ENCODE measurements at regions of chr13 and their contacts with region 1.

Region 1: DNA sequence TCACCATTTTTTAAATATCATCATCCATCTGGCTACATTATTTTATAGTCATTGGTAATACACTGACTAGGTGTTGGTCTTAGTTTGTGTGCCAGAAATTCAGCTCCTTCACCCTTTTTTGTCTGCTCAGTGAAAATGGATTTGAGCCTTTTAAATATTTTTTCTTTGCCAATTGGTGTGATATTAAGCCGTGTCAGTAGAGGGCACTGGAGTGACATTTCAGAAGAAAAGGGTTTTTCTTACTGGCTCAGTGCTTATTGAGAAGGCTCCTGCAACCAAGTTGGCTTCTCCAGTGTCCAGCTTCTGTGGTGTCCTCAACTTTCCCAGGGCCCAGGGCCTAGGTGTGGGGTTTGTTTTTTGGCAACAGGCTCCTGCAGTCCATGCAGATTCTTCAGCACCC is 546.6 kb downstream of the DACH1 start:
- DNase-seq: peak; percentile 31
- H3K4me3 ChIP-seq: no peak overlapping the region
- H3K27ac ChIP-seq: no peak overlapping the region
- H3K4me1 ChIP-seq: no peaks in the 10 kb centered on the region
- H3K27me3 ChIP-seq: no peaks in the 10 kb centered on the region
- CTCF ChIP-seq: peak; percentile 18 to 49
- POLR2A ChIP-seq: no peak

Region 2: DNA sequence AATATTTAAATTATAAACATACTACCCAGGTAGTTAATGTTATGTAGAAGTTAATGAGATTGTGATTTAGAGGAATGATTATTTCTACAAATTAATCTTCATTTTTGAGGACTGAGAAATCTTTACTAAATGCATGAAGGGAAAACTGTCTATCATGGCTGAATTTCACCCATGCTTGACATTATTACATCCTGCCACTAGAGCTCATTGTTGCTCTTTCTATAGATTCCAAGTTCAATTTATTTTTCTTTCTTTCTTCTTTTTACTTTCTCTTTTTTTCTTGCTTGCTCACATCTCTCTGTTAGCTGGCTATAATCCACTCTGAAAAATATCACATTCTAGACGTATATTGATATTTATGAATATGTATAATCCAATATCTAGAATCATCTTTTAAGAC is 707.2 kb before region 1 on chr13:
- CTCF ChIA-PET with region 1: interaction called, 3 read pairs
- POLR2A ChIA-PET with region 1: no interaction called
- dilution Hi-C with region 1: no loop called
- intact Hi-C with region 1: loop called (anchors 2 kb)
- DNase-seq: peak; percentile 25
- H3K4me3 ChIP-seq: no peak overlapping the region
- H3K27ac ChIP-seq: no peak overlapping the region
- H3K4me1 ChIP-seq: no peaks in the 10 kb centered on the region
- H3K27me3 ChIP-seq: no peaks in the 10 kb centered on the region
- CTCF ChIP-seq: peak; percentile 25 to 33
- POLR2A ChIP-seq: no peak

Region 3: DNA sequence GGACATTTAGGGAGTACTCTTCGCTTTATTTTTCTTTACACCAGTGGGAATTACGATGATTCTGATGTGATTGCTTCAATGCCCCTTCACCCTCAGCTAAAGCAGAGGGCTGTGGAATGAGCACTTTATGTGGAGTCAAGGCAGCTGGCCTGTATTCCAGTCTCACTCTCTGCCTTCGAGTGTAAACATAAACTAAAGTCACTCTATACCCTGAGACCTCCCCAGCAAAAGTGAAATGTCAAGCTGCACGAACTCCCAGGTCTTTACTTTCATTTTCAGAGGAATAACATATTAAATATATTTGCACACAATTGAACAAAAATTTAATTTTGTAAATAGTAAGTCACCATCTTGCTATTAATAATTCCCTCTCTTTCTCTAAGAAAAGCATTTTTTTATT is 10.5 kb before region 1 on chr13:
- CTCF ChIA-PET with region 1: interaction called, 10 read pairs
- POLR2A ChIA-PET with region 1: no interaction called
- dilution Hi-C with region 1: no loop called
- intact Hi-C with region 1: no loop called
- DNase-seq: no peak
- H3K4me3 ChIP-seq: no peak overlapping the region
- H3K27ac ChIP-seq: no peak overlapping the region
- H3K4me1 ChIP-seq: no peaks in the 10 kb centered on the region
- H3K27me3 ChIP-seq: no peaks in the 10 kb centered on the region
- CTCF ChIP-seq: no peak
- POLR2A ChIP-seq: no peak

Region 4: GRCh38 chr13:71368336-71368735 is 47.9 kb after region 1 on chr13:
- CTCF ChIA-PET with region 1: no interaction called
- POLR2A ChIA-PET with region 1: no interaction called
- dilution Hi-C with region 1: no loop called
- intact Hi-C with region 1: no loop called
- DNase-seq: no peak
- H3K4me3 ChIP-seq: no peak overlapping the region
- H3K27ac ChIP-seq: no peak overlapping the region
- H3K4me1 ChIP-seq: no peaks in the 10 kb centered on the region
- H3K27me3 ChIP-seq: no peaks in the 10 kb centered on the region
- CTCF ChIP-seq: no peak
- POLR2A ChIP-seq: no peak

Region 5: GRCh38 chr13:71625694-71626093 is 305.2 kb after region 1 on chr13:
- CTCF ChIA-PET with region 1: no interaction called
- POLR2A ChIA-PET with region 1: no interaction called
- dilution Hi-C with region 1: no loop called
- intact Hi-C with region 1: loop called (anchors 1 kb)
- DNase-seq: peak; percentile 93
- H3K4me3 ChIP-seq: peak overlapping the region in 1 of 3 experiments; percentile 45
- H3K27ac ChIP-seq: peak overlapping the region; percentile 83
- H3K4me1 ChIP-seq: peaks cover 56% of the 10 kb centered on the region
- H3K27me3 ChIP-seq: no peaks in the 10 kb centered on the region
- CTCF ChIP-seq: no peak
- POLR2A ChIP-seq: no peak

Region 6: DNA sequence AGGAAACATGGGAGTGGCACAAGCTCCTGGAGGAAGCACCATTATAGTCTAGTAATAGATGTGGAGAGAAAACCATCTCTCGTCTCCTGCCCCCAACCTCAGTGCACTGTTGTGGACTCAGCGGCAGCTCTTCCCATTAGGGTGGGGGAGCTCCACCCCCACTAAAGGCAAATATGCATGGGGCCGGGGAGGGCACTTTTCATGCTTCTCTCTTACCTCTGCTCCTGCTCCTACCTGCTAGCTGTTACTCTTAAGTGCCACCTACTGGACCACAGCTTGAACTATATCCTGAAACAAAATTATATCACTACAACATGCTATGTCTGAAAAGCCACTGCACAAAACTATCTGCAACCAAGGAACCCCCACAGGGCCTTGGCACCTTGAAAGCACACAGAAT is 659.2 kb after region 1 on chr13:
- CTCF ChIA-PET with region 1: interaction called, 8 read pairs
- POLR2A ChIA-PET with region 1: no interaction called
- dilution Hi-C with region 1: no loop called
- intact Hi-C with region 1: loop called (anchors 1 kb)
- DNase-seq: peak; percentile 33
- H3K4me3 ChIP-seq: no peak overlapping the region
- H3K27ac ChIP-seq: no peak overlapping the region
- H3K4me1 ChIP-seq: no peaks in the 10 kb centered on the region
- H3K27me3 ChIP-seq: no peaks in the 10 kb centered on the region
- CTCF ChIP-seq: peak; percentile 13 to 43
- POLR2A ChIP-seq: no peak

Region 7: DNA sequence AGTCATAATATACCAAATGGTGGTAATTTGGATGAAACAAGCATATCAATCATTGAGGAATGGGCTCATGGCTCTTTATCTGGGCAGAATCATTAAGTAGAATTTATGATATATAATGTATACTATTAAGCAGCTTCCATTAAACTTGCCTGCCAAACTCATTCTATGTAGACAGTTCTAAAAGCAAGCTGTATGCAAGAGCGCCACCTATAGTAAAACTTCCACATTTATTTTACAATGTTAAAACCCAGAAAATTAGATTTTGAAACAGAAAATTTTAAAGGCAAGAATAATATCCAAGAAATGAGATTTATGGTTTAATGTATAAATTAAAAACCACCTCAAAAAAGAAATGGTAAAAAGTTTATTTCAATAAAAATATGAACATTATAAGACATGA is 1245.4 kb after region 1 on chr13:
- CTCF ChIA-PET with region 1: interaction called, 8 read pairs
- POLR2A ChIA-PET with region 1: no interaction called
- dilution Hi-C with region 1: no loop called
- intact Hi-C with region 1: loop called (anchors 5 kb)
- DNase-seq: peak; percentile 25
- H3K4me3 ChIP-seq: no peak overlapping the region
- H3K27ac ChIP-seq: no peak overlapping the region
- H3K4me1 ChIP-seq: no peaks in the 10 kb centered on the region
- H3K27me3 ChIP-seq: no peaks in the 10 kb centered on the region
- CTCF ChIP-seq: peak; percentile 28 to 37
- POLR2A ChIP-seq: no peak

Measured in endothelial cell of umbilical vein (primary cell).